ENCODE measurements at regions of chr5 and their contacts with region 1.

Region 1: DNA sequence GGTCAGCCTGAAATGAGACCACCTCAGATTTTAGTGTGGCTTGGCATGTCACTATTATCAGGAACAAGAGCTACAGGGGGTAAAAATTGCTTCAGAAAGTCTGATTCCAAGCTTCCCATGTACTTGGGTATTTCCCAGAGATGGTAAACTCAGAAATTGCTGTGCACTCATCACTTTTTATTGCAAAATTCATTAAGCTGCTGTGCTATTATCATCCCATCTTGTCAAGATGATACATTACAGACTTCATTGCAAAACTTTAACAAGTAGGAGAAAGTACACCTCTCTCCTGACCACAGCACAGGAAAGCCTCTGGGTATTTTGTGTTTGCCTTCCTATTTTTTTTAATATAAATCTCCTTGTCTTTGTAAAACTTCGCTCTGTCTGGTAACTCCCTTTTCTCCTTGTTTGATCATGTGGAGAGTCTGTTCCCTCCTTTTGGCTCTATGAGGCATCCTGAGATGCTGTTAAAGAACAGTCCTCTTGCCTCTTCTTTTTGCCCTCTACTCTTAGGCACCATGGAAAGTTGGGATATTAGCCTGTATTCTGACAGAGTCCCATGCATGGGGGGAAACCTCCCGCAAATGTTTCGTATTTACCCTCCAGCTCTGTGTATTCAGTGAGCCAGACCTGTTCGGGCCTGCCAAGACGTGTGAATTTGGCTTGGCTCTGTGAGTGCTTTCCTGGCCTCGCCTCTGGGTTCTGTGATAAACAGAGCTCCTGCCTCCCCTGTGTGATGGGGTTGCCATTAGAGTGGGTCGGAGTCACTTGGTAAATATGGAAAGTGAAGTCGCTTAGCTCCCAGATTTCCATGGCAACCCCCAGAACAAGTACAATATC is 260.7 kb downstream of the NR3C1 start:
- DNase-seq: peak in 9 of 10 donors; percentile 10 to 92 (median 61)

Region 2: GRCh38 chr5:143051244-143052058 is 91.4 kb before region 1 on chr5:
- intact Hi-C with region 1: loop called (anchors 10 kb)
- DNase-seq: no peak

Region 3: DNA sequence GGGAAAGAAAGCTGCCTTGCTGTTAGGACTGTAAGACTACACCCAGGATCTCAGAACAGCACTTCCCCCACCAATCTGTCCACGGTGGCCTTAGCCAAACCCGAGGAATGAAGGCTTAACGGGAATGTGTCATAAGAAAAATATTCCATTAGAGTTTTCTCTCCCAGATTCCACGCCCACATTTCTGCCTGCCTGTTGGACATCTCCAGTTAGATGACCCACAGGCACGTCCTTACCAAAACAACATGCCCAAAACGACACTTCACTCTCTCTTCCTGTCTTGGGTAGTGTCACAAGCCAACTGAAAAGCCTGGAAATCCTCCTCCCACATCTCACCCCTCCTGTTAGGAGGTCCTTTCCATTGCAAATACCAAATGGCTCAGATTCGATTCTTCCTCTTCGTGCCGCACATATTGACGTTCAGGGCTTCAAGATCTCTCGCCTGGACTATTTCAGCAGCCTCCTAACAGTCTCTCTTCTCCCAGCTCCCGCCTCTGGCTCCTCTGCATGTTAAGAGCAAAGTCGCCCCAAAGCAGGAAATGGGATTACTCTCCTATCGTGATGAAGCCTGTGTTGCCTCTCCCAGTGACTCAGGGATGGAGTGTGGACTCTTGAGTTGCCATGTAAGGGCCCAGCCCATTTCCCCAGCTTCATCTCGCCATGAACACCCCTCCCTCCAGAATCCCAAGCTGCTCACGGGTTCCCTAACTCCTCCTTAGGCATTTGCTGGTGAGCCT is 101.4 kb after region 1 on chr5:
- intact Hi-C with region 1: no loop called
- DNase-seq: peak in 5 of 10 donors; percentile 20 to 89 (median 64)

Measured in posterior cingulate gyrus (tissue), 11 donors.